Colonic mucosa (tissue), 4 donors: ENCODE measurements at regions of chr17 and their contacts with region 1.

Region 1: DNA sequence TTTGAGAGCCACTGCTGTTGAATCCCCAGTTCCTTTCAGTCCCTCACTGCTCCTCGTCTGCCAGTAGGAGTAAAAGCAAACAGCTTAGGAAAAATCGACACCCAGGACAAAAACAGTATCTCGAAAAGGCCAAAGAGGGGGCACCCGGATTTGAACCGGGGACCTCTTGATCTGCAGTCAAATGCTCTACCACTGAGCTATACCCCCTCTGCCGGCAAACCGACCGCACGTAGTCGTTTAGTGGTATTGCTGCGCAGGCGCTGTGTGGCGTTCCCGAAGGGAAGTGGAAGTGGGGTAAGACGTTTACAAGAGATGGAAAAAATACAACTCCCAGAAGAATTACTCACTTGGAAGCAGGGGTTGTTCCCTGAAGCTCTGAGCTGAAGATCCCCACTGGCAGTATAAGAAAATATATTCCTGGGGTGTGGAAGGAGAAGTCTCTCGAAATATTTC is 2.2 kb upstream of the PLXDC1 start:
- DNase-seq: peak; percentile 95
- H3K4me3 ChIP-seq: peak overlapping the region; percentile 69
- H3K27ac ChIP-seq: peak overlapping the region; percentile 84
- H3K4me1 ChIP-seq: no peaks in the 10 kb centered on the region
- H3K27me3 ChIP-seq: peaks cover 18% of the 10 kb centered on the region
- CTCF ChIP-seq: no peak

Region 2: DNA sequence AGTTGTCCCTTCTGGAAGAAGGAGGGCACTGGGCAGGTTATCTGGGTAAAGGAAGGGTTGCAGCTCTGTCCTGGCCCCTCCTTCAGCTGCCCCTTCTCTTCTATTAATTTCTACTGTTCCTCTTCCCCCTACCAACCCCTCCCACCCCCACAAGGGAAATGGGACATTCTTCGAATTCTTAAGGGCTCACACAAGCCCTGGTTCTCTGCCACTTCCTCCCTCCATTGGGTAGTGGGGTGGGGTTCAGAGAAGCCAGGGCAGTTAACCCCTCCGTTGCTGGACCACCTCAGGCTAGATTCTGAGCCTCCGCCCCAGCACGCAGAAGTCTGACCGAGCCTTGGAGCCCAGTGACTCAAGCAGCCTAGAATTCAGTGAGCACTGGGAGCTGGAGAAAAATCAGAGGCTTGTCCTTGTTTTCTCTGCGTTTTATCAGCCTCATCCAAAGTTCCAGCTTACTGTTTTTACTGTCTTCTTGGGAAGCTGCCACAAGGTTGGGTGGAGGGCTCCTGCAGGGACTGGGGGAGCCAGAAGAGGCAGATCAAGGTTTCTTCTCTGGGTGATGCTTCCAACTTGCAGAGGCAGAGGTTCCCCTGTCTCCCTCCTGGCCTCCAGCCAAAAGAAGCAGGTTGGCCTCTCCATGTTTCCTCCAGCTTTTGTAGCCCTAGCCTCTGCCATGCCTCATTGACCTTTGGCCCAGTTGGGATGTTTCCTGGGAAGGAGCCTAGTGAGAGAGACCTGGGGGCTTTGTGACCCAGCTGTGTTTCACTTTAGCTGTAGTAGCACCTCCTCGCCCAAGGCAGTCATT is 273.5 kb before region 1 on chr17:
- intact Hi-C with region 1: loop called (anchors 10 kb)
- DNase-seq: no peak
- H3K4me3 ChIP-seq: no peak overlapping the region
- H3K27ac ChIP-seq: no peak overlapping the region
- H3K4me1 ChIP-seq: peaks cover 42% of the 10 kb centered on the region
- H3K27me3 ChIP-seq: no peaks in the 10 kb centered on the region
- CTCF ChIP-seq: no peak

Region 3: DNA sequence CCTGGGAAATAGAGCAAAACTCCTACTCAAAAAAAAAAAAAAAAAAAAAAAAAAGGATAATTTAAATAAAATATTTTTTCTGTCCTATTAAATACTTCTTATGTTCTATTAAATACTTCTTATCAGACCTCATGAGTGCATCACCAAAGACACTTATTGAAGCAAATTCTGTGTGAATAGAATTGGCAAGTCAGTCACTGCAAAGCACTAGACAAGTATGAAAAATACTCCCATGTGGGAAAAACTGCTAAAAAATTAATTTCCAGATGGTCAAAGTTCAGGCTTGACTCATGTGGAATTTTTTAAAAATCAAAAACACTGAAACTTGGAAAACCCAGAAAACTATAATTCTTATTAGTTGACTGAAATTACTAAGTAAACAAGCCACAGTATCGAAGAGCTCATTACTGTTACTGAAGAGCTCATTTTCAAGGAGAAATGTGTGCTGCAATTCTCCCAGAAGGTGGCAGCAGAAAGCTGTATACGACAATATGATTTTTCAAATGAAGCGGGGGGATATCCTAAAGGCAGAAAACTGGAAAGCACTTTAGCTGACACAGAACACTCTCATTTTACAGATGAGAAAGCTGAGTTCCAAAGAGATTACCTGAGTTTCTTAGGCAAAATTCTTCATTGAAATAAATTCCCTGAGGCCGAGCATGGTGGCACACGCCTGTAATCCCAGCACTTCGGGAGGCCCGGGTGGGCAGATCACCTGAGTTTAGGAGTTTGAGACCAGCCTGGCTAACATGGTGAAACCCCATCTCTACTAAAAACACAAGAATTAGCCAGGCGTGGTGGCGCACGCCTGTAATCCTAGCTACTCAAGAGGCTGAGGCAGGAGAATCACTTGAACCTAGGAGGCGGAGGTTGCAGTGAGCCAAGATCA is 170.5 kb before region 1 on chr17:
- intact Hi-C with region 1: loop called (anchors 2 kb)
- DNase-seq: peak; percentile 52
- H3K4me3 ChIP-seq: no peak overlapping the region
- H3K27ac ChIP-seq: no peak overlapping the region
- H3K4me1 ChIP-seq: no peaks in the 10 kb centered on the region
- H3K27me3 ChIP-seq: no peaks in the 10 kb centered on the region
- CTCF ChIP-seq: peak; percentile 67